GM12878 (cell line): ENCODE measurements at regions of chr12 and their contacts with region 1.

Region 1: GRCh38 chr12:94262228-94263010 is 114.0 kb downstream of the PLXNC1 start:
- DNase-seq: no peak
- ATAC-seq: peak; percentile 80
- H3K4me3 ChIP-seq: peak overlapping the region; percentile 35; the same call in 1 of the 2 replicates
- H3K27ac ChIP-seq: peak overlapping the region; percentile 88
- H3K4me1 ChIP-seq: peaks cover 59% of the 10 kb centered on the region
- H3K27me3 ChIP-seq: no peaks in the 10 kb centered on the region
- CTCF ChIP-seq: no peak
- EP300 ChIP-seq: peak in 1 of 2 experiments; percentile 11; a peak in 1 of 4 replicates
- POLR2A ChIP-seq: peak; percentile 76
- RAD21 ChIP-seq: no peak; the same call in 1 of the 2 replicates

Region 2: GRCh38 chr12:93751864-93752610 is 510.4 kb before region 1 on chr12:
- CTCF ChIA-PET with region 1: no interaction called
- POLR2A ChIA-PET with region 1: no interaction called
- RAD21 ChIA-PET with region 1: no interaction called
- SMC1A ChIA-PET with region 1: no interaction called
- in situ Hi-C with region 1: no loop called
- intact Hi-C with region 1: no loop called
- DNase-seq: no peak
- ATAC-seq: no peak
- H3K4me3 ChIP-seq: no peak overlapping the region
- H3K27ac ChIP-seq: no peak overlapping the region
- H3K4me1 ChIP-seq: no peaks in the 10 kb centered on the region
- H3K27me3 ChIP-seq: no peaks in the 10 kb centered on the region
- CTCF ChIP-seq: no peak
- EP300 ChIP-seq: no peak
- POLR2A ChIP-seq: no peak
- RAD21 ChIP-seq: no peak

Region 3: DNA sequence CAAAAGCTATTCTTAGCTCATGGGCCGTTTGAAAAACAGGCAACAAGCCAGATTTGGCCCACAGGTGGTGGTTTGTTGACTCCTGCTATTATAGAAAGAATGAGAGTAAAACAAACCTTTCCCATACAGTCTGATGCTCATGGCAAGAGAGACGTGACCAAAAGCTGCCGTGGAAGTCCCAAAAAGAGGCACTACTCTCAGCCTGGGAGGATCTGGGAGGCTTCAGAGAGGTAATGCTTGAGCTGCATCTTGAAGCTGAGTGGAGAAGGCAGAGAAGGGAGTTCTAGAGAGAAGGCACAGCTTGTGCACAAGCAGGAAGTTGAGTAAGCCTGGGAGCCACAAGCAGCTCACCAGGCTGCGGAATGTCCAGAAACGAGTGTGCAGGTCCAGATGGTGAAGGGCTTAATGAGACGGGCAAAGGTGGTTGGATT is 104.4 kb before region 1 on chr12:
- CTCF ChIA-PET with region 1: interaction called, 7 read pairs
- POLR2A ChIA-PET with region 1: interaction called, 5 read pairs
- RAD21 ChIA-PET with region 1: interaction called, 16 read pairs
- SMC1A ChIA-PET with region 1: interaction called, 39 read pairs
- in situ Hi-C with region 1: no loop called
- intact Hi-C with region 1: no loop called
- DNase-seq: peak; percentile 59
- ATAC-seq: peak; percentile 84
- H3K4me3 ChIP-seq: peak overlapping the region; percentile 54; the same call in 1 of the 2 replicates
- H3K27ac ChIP-seq: peak overlapping the region; percentile 83
- H3K4me1 ChIP-seq: peaks cover 21% of the 10 kb centered on the region
- H3K27me3 ChIP-seq: no peaks in the 10 kb centered on the region
- CTCF ChIP-seq: no peak
- EP300 ChIP-seq: no peak
- POLR2A ChIP-seq: peak; percentile 51
- RAD21 ChIP-seq: no peak

Region 4: DNA sequence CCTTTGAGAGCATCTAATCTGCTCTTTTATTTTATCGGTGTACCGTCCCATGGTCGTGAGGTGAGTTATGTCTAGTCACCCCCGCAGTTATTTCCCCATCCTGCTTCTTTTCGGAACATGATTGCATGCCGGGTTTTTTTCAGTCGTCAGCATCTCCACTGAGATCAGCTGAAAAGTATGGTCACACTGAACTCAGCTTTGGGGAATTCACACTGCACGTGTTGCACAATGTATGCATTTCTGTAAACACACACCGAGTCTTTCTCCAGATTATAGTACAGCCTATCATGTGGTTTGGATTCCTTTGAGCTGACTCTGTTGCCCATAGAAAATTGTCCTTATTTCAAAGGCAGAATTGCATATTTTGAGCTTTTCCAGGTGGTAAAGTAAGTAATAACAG is 89.4 kb before region 1 on chr12:
- CTCF ChIA-PET with region 1: interaction called, 3 read pairs
- POLR2A ChIA-PET with region 1: interaction called, 4 read pairs
- RAD21 ChIA-PET with region 1: interaction called, 24 read pairs
- SMC1A ChIA-PET with region 1: interaction called, 14 read pairs
- in situ Hi-C with region 1: no loop called
- intact Hi-C with region 1: no loop called
- DNase-seq: no peak
- ATAC-seq: no peak
- H3K4me3 ChIP-seq: no peak overlapping the region
- H3K27ac ChIP-seq: peak overlapping the region; percentile 92
- H3K4me1 ChIP-seq: peaks cover 47% of the 10 kb centered on the region
- H3K27me3 ChIP-seq: no peaks in the 10 kb centered on the region
- CTCF ChIP-seq: no peak
- EP300 ChIP-seq: no peak
- POLR2A ChIP-seq: no peak
- RAD21 ChIP-seq: no peak

Region 5: DNA sequence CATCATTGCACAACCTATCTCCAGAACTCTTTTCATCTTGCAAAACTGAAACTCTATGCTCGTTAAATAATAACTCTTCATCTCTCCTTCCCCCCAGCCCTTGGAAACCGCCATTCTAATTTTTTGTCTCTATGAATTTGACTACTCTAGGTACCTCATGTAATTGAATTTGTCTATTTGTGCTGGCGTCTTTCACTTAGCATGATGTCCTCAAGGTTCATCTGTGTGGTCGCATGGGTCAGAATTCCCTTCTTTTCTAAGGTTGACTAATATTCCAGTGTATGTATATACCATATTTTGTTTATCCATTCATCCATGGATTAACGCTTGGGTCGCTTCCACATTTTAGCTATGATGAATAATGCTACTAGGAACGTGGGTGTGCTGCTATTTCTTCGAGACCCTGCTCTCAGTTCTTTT is 33.9 kb before region 1 on chr12:
- CTCF ChIA-PET with region 1: interaction called, 3 read pairs
- POLR2A ChIA-PET with region 1: interaction called, 3 read pairs
- RAD21 ChIA-PET with region 1: no interaction called
- SMC1A ChIA-PET with region 1: interaction called, 6 read pairs
- in situ Hi-C with region 1: no loop called
- intact Hi-C with region 1: loop called (anchors 2 kb)
- DNase-seq: no peak
- ATAC-seq: peak; percentile 83
- H3K4me3 ChIP-seq: no peak overlapping the region
- H3K27ac ChIP-seq: 0 out of 2 replicates have a peak overlapping the region, but pooled peaks have one; percentile 13
- H3K4me1 ChIP-seq: peaks cover 39% of the 10 kb centered on the region
- H3K27me3 ChIP-seq: no peaks in the 10 kb centered on the region
- CTCF ChIP-seq: no peak
- EP300 ChIP-seq: peak in 1 of 2 experiments; percentile 39; a peak in 1 of 4 replicates
- POLR2A ChIP-seq: no peak
- RAD21 ChIP-seq: no peak

Region 6: GRCh38 chr12:94244165-94245133 is 18.0 kb before region 1 on chr12:
- CTCF ChIA-PET with region 1: interaction called, 4 read pairs
- POLR2A ChIA-PET with region 1: interaction called, 15 read pairs
- RAD21 ChIA-PET with region 1: interaction called, 20 read pairs
- SMC1A ChIA-PET with region 1: interaction called, 16 read pairs
- in situ Hi-C with region 1: no loop called
- intact Hi-C with region 1: no loop called
- DNase-seq: no peak
- ATAC-seq: peak; percentile 86
- H3K4me3 ChIP-seq: no peak overlapping the region
- H3K27ac ChIP-seq: peak overlapping the region; percentile 41
- H3K4me1 ChIP-seq: peaks cover 37% of the 10 kb centered on the region
- H3K27me3 ChIP-seq: no peaks in the 10 kb centered on the region
- CTCF ChIP-seq: no peak
- EP300 ChIP-seq: peak in 1 of 2 experiments; percentile 63; a peak in 1 of 4 replicates
- POLR2A ChIP-seq: no peak; the same call in 1 of the 2 replicates
- RAD21 ChIP-seq: no peak

Region 7: DNA sequence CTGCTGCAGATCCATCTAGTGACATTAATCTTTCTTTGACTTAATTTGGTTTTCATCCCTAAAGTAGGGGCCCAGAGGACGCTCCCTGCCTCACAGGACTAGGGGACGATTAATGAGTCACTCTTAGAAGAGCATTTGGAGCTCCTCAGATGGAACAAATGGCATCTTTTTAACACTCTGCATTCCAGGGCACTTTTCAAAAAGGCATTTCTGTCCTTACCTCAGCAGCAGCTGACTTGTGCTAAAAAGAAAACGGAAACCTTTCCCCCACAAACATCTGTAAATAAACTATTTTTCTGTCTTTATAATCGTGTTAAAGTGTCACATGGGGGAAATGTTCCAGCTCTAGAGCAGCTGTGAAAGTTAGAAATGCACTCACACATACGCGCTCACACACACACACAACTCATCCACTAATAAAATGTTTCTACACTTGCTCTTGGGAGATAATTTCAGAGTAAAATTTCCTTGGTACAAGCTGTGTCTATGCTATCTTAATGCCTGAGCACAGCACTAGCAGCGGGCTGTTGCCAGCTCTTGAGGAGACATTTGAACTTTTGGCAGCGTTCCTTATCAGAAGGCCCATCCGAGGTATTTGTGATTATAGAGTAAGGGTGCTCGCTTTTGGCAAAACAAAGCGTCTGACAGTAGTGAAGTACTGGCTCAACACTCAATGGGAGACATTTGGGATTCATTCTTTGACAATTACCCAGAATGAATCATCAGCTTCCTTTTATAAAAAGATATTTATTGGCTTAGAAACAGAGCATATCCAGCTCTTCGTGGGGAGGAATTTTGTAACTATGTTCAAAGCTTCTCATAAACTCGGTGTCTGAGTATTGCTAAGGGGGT is 27.3 kb after region 1 on chr12:
- CTCF ChIA-PET with region 1: no interaction called
- POLR2A ChIA-PET with region 1: no interaction called
- RAD21 ChIA-PET with region 1: interaction called, 3 read pairs
- SMC1A ChIA-PET with region 1: interaction called, 11 read pairs
- in situ Hi-C with region 1: no loop called
- intact Hi-C with region 1: no loop called
- DNase-seq: no peak
- ATAC-seq: no peak
- H3K4me3 ChIP-seq: no peak overlapping the region
- H3K27ac ChIP-seq: no peak overlapping the region
- H3K4me1 ChIP-seq: no peaks in the 10 kb centered on the region
- H3K27me3 ChIP-seq: no peaks in the 10 kb centered on the region
- CTCF ChIP-seq: no peak
- EP300 ChIP-seq: no peak
- POLR2A ChIP-seq: no peak
- RAD21 ChIP-seq: no peak

Region 8: DNA sequence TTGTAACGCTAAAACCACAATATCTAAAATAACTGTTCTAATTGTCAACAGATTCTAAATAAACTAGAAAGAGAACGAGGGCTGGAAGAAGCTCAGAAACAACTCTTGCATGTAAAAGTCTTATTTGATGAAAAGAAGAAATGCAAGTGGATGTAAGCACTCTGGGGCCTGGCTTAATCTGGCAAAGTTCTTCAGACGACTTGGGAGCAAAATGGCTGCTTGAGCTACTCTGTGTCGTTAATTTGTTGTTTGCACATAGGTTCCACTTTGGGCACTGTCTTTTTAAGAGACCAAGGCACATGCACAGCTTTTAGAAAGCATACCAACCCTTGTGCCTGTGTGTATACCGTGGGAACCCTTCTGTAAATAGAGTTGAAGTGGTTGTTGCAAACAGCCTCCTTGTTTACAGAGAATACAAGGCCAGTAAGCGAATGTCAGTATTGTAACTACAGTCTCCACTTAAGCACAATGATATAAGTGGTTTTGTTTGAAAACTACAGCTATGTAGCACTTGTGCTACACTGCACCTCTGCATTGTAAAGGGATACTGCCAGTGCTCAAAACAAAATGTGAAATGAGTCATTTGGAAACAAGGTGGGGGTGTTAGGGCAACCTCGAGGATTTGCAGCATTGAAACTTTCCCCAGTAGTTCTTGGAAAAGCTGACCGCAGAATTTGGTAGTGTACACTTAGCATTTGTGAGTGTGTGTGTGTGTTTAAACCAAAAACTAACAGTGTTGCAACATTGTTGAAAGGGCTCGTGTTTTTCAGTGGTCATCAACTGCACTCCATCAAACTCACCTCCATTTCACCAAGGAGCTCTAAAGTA is 42.9 kb after region 1 on chr12:
- CTCF ChIA-PET with region 1: interaction called, 3 read pairs
- POLR2A ChIA-PET with region 1: no interaction called
- RAD21 ChIA-PET with region 1: interaction called, 8 read pairs
- SMC1A ChIA-PET with region 1: interaction called, 10 read pairs
- in situ Hi-C with region 1: no loop called
- intact Hi-C with region 1: no loop called
- DNase-seq: peak; percentile 67
- ATAC-seq: peak; percentile 71
- H3K4me3 ChIP-seq: no peak overlapping the region
- H3K27ac ChIP-seq: peak overlapping the region; percentile 42
- H3K4me1 ChIP-seq: peaks cover 35% of the 10 kb centered on the region
- H3K27me3 ChIP-seq: no peaks in the 10 kb centered on the region
- CTCF ChIP-seq: no peak
- EP300 ChIP-seq: peak; percentile 73 to 76; a peak in 3 of 4 replicates
- POLR2A ChIP-seq: no peak
- RAD21 ChIP-seq: no peak